Dendritic cell treated with granulocyte-macrophage colony-stimulating factor and Interleukin-4, amounts not matched to agents 40 ng/mL and 50 ng/mL, for 4 days (primary cell): ENCODE measurements at regions of chr14 and their contacts with region 1.

Region 1: DNA sequence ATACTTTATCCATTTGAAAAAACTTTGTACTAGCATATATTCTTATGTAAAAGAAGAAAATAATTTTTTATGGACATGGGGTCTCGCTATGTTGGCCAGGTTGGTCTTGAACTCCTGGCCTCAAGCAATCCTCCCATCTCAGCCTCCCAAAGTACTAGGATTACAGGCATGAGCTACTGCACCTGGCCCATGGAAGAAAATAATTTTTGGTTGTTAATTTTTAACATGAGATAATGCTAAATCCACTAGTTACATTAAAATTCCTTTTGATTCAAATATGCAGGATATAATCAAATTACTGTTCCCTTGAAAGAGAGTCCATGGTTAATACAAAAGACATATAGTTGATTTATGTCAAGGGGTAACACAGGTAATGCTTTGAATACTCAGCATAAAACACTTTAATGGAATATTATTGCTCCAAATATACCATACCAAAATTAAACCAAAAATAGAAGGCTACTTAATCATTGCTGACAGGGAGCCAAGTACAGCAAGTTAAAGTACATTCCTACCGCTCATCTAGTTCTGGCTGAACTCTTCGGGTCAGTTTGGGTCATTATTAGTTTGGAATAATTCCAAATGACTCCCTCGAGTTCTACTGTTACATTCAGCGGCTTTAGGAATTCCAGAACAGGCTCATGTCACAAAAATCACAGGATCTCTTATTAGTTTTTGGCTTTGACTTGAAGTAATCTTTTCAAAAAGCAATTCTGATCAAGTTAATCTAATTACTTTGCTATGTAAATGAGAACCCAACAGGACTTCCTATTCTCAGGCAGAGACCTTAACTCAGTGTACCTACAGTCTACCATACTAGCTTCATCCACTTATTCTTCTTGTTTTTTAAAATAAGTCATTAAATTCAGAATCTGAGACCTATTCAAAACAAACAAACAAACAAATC is 6.1 kb downstream of the SOS2 start:
- H3K4me3 Mint-ChIP-seq: peak overlapping the region; percentile 17
- H3K27ac Mint-ChIP-seq: peak overlapping the region; percentile 65
- H3K4me1 Mint-ChIP-seq: peaks cover 47% of the 10 kb centered on the region
- H3K27me3 Mint-ChIP-seq: no peaks in the 10 kb centered on the region

Region 2: DNA sequence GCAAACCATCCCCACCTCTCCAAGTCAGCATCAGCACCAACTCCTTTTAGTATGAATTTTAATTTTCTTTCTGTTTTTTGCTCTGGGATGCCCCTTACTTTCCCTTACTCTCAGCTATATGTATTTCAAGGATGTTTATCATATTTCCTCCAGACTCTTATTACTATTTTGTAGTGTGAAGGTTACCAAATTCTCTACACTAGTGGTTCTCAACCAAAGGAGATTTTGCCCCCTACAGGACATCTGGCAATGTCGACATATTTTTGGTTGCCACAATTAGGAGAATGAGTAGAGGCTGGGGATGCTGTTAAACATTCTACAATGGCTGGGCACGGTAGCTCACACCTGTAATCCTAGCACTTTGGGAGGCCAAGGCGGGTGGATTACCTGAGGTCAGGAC is 35.2 kb after region 1 on chr14:
- intact Hi-C with region 1: loop called (anchors 5 kb)
- H3K4me3 Mint-ChIP-seq: no peak overlapping the region
- H3K27ac Mint-ChIP-seq: no peak overlapping the region
- H3K4me1 Mint-ChIP-seq: no peaks in the 10 kb centered on the region
- H3K27me3 Mint-ChIP-seq: no peaks in the 10 kb centered on the region

Region 3: GRCh38 chr14:50532502-50533240 is 307.4 kb after region 1 on chr14 and contains the start of gene MAP4K5:
- intact Hi-C with region 1: loop called (anchors 5 kb)
- H3K4me3 Mint-ChIP-seq: peak within 1 kb of the TSS; percentile 87
- H3K27ac Mint-ChIP-seq: peak within 1 kb of the TSS; percentile 66
- H3K4me1 Mint-ChIP-seq: peaks cover 53% of the 10 kb centered on the region
- H3K27me3 Mint-ChIP-seq: no peaks in the 10 kb centered on the region